K562 (cell line): ENCODE measurements at regions of chr22 and their contacts with region 1.

Region 1: GRCh38 chr22:26632422-26633155 is 10.8 kb downstream of the CRYBA4 start:
- DNase-seq: peak; percentile 85 to 90 (median 86)
- ATAC-seq: peak; percentile 88
- H3K4me3 ChIP-seq: peak overlapping the region; percentile 15; the same call in 1 of the 2 replicates
- H3K27ac ChIP-seq: peak overlapping the region; percentile 87
- H3K4me1 ChIP-seq: peaks cover 20 to 49% of the 10 kb centered on the region in 2 experiments
- H3K27me3 ChIP-seq: no peaks in the 10 kb centered on the region
- CTCF ChIP-seq: no peak
- EP300 ChIP-seq: peak; percentile 97
- POLR2A ChIP-seq: peak; percentile 69
- RAD21 ChIP-seq: no peak; a peak in 2 of 4 replicates

Region 2: DNA sequence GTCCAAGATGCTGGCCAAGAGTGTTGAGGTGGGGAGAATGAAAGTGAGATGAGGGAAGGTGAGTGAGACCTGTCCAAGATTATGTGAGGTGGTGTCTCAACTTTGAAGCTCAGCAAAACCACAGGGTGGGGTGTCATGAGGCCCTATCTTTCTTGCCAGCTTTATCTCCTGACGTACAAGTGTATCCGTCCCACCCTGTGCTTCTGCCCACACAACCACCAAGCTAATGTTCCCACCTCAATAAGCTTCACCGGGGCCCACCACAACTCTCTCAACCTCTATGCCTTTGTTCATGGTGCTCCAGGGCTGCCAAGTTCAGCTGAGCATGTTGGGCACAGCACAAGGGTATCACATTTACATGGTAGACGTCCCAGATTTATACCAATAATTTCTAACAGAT is 35.6 kb before region 1 on chr22:
- CTCF ChIA-PET with region 1: no interaction called
- POLR2A ChIA-PET with region 1: no interaction called
- in situ Hi-C with region 1: no loop called
- intact Hi-C with region 1: no loop called
- DNase-seq: peak in 2 of 4 experiments; percentile 27 to 29
- ATAC-seq: no peak
- H3K4me3 ChIP-seq: no peak overlapping the region
- H3K27ac ChIP-seq: no peak overlapping the region
- H3K4me1 ChIP-seq: peaks cover 4 to 8% of the 10 kb centered on the region in 2 experiments; a peak in 3 of 5 replicates
- H3K27me3 ChIP-seq: no peaks in the 10 kb centered on the region
- CTCF ChIP-seq: no peak
- EP300 ChIP-seq: no peak
- POLR2A ChIP-seq: no peak
- RAD21 ChIP-seq: no peak

Region 3: DNA sequence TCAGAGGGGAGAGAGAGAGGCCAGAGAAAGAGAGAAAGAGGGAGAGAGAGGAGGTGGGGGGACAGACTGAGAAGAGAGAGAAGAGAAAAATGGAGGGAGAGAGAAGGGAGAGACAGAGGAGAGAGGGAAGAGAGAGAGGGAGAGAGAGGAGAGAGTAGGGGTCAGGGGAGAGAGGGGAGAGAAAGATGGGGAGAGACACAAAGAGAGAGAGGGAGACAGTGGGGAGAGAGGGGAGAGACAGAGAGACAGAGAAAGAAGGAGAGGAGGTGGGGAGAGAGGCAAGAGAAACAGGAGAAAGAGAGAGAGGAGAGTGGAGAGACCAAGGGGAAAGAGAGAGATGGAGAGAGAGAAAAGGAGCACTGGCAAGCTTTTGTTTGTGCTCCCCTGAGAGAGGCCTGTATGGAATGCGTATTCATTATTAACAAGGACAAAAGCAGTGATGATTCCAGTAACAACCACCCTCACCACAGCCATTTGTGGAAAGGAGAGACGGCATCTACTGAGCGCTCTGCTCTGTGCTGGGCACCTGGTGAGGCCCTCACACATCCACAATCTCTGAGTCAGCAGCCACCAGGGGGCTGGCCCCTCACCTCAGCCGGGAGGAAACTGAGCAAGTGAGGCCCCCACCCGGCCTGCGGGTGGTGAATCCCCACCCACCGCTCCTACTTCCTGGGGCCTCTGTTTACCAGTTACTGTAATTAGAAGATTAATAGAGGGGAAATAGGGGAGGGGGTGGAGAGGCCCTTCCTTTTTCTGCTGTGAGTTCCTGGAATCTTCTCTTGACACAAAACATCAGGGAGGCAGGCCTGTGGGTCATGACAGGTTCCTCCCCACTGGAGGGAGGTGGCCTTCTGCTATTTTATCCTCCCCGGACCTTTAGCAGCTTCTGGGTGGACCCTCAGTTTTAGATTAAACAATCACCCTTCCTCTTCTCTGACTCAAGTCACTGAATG is 10.2 kb after region 1 on chr22:
- CTCF ChIA-PET with region 1: no interaction called
- POLR2A ChIA-PET with region 1: interaction called, 12 read pairs
- in situ Hi-C with region 1: no loop called
- intact Hi-C with region 1: no loop called
- DNase-seq: peak; percentile 57 to 84 (median 62)
- ATAC-seq: peak; percentile 52
- H3K4me3 ChIP-seq: no peak overlapping the region
- H3K27ac ChIP-seq: peak overlapping the region; percentile 76
- H3K4me1 ChIP-seq: peaks cover 34 to 44% of the 10 kb centered on the region in 2 experiments; a peak in 4 of 5 replicates
- H3K27me3 ChIP-seq: no peaks in the 10 kb centered on the region
- CTCF ChIP-seq: peak; percentile 47 to 62 (median 48); a peak in 5 of 6 replicates
- EP300 ChIP-seq: 0 out of 2 replicates have a peak, but pooled peaks have one; percentile 27
- POLR2A ChIP-seq: peak; percentile 48; the same call in 1 of the 2 replicates
- RAD21 ChIP-seq: peak in 1 of 2 experiments; percentile 43; a peak in 2 of 4 replicates